ENCODE measurements at regions of chr2 and their contacts with region 1.

Region 1: DNA sequence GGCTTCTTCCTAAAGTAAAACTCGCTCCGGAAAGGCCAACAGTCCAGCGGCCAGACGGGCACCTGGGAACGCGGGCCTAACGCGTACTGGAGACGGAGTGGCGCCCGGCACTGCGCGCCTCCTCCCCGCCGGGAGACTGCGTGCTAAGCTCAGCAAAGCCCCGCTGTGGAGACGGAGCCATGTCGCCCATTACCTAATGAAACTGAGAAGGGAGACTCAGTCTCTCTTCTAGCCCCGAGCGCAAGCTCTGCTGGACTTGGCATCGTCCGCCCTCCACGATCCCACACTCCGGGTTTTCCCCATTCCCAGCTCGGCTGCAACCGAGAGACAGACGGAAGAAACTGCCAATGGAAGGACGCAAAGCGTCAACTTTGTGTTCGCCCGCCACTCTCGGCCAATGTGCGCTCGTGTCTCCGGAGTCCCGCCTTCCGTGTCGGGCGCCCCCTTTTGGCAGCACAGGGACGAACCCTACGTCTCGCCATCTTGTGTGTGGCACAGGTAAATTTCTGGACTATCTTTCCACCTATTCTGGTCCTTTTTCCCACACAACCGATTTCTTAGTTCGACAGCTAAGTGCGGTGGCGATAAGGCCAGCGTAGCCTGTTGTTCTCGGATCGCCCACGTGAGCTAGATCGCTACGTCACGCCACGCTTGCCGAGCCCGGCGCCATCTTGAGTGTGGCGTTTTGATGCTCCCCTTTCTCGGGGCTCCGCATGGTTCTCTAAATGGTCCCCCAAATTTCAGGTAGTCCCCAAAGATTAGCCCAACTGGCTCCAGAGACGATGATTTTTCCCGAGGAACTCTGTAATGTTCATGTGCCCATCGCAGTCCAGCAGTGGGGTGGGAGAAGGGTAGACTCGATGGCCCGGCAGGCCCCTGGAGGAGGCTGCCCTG is 1.3 kb upstream of the PTMA start:
- DNase-seq: peak; percentile 98
- ATAC-seq: peak; percentile 58
- H3K4me3 Mint-ChIP-seq: peak overlapping the region; percentile 88
- H3K27ac Mint-ChIP-seq: peak overlapping the region; percentile 100
- H3K4me1 Mint-ChIP-seq: peaks cover 19% of the 10 kb centered on the region
- H3K27me3 Mint-ChIP-seq: peaks cover 5% of the 10 kb centered on the region; the same call in 1 of the 2 replicates
- CTCF ChIP-seq: peak; percentile 73

Region 2: DNA sequence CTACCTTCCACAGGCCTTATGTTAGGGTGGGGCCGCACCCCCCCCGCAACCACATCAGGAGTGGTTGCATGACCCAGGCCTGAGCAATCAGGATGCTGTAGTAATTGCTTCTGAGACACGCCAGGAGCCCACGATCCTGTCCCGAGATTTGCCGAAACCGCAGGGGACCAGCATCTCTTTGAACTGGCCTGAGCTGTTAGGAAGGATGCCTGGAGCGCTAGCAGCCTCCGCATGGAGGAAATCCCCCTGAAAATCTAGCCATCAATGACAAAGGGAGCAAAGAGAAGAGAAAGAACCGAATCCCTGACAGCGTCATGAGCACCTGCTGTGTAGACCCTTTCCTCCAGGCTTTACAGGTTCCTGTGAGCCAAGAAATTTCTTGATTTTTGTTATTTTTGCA is 123.0 kb before region 1 on chr2:
- CTCF ChIA-PET with region 1: no interaction called
- POLR2A ChIA-PET with region 1: no interaction called
- DNase-seq: peak; percentile 44
- ATAC-seq: peak; percentile 82
- H3K4me3 Mint-ChIP-seq: no peak overlapping the region
- H3K27ac Mint-ChIP-seq: peak overlapping the region; percentile 34; the same call in 1 of the 2 replicates
- H3K4me1 Mint-ChIP-seq: peaks cover 19% of the 10 kb centered on the region
- H3K27me3 Mint-ChIP-seq: peaks cover 3% of the 10 kb centered on the region; the same call in 1 of the 2 replicates
- CTCF ChIP-seq: no peak

Region 3: GRCh38 chr2:231612179-231613053 is 94.6 kb before region 1 on chr2:
- CTCF ChIA-PET with region 1: interaction called, 21 read pairs
- POLR2A ChIA-PET with region 1: interaction called, 71 read pairs
- DNase-seq: peak; percentile 96
- ATAC-seq: peak; percentile 41
- H3K4me3 Mint-ChIP-seq: peak overlapping the region; percentile 77
- H3K27ac Mint-ChIP-seq: peak overlapping the region; percentile 100
- H3K4me1 Mint-ChIP-seq: peaks cover 58% of the 10 kb centered on the region
- H3K27me3 Mint-ChIP-seq: peaks cover 2% of the 10 kb centered on the region; the same call in 1 of the 2 replicates
- CTCF ChIP-seq: peak; percentile 99

Region 4: GRCh38 chr2:231662028-231662810 is 44.8 kb before region 1 on chr2:
- CTCF ChIA-PET with region 1: interaction called, 5 read pairs
- POLR2A ChIA-PET with region 1: interaction called, 17 read pairs
- DNase-seq: peak; percentile 98
- ATAC-seq: peak; percentile 67
- H3K4me3 Mint-ChIP-seq: peak overlapping the region; percentile 60
- H3K27ac Mint-ChIP-seq: peak overlapping the region; percentile 94
- H3K4me1 Mint-ChIP-seq: peaks cover 44% of the 10 kb centered on the region
- H3K27me3 Mint-ChIP-seq: peaks cover 20% of the 10 kb centered on the region
- CTCF ChIP-seq: no peak

Region 5: DNA sequence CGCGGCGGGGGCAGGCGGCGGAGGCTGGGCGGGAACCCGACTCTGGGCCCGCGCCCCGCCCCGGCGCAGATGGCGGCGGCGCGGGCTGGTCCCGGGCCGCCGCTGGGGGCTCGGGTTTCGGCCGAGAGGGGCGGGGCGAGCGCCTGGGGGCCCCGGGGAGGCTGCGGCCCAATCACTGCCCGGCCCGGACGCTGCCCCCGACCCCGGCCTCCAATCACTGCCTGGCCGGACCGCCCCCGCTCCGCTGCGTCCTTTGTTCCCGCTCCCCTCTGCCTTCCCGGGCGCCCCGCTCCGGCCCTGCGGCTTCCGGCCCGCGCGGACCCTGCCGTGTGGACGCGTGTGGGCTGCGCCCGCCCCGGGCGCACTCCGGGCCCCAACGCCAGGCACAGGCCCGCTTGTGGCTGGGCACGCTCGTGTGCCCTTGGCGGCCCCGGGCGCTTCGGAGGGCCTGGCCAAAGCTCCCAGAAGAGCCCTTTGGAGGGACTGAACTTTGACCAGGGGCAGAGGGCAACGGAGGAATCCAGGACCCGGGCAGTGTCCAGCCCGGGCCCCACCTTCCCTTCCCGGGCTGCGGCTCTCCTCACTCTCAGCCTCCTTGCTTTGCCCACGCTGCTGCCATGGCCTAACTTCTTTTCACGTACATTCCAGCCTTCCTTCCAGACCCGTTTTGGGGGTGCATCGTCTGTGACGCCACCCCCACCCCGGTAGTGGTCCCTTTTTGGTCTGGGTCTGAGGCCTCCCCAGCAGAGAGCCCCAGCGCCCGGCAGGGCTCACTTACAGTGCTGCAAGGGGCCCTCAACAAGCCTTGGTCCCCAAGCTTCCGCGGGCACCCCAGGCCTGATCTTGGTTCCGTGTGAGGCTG is 25.8 kb before region 1 on chr2:
- CTCF ChIA-PET with region 1: interaction called, 260 read pairs
- POLR2A ChIA-PET with region 1: interaction called, 72 read pairs
- DNase-seq: peak; percentile 94
- ATAC-seq: peak; percentile 75
- H3K4me3 Mint-ChIP-seq: peak overlapping the region; percentile 86
- H3K27ac Mint-ChIP-seq: peak overlapping the region; percentile 99
- H3K4me1 Mint-ChIP-seq: peaks cover 41% of the 10 kb centered on the region
- H3K27me3 Mint-ChIP-seq: no peaks in the 10 kb centered on the region
- CTCF ChIP-seq: no peak

Region 6: DNA sequence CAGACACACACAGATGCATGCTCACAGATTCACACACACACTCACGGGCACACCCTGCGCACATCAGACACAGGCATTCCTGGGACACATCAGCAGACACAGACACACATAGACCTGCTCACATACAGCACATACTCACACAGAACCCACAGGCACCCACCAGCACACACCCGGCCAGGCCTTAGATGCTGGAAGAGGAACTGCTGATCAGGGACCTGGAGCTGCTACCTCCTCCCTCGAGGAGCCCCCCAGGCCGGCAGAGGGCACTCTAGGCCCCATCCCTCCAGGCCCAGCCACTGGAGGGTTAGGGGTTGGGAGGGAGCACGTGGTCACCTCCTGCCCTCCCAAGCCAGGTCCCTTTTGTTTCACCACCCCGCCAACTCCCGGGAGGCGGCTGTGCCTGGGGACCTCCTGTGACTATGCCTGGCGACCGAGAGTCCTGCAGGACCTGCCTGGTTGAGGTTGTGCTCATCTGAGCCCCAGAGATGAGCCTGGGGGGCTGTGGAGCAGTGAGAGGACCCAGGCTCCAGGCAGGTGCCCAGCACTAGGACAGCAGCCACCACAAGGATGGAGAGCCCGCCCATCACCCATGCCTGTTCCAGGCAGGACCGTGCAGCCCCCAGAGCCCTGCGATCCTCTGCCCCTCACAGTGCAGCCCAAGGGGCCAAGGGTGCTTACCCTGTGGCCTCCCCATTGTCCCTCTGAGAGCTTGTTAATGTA is 19.7 kb before region 1 on chr2:
- CTCF ChIA-PET with region 1: interaction called, 125 read pairs
- POLR2A ChIA-PET with region 1: interaction called, 61 read pairs
- DNase-seq: peak; percentile 92
- ATAC-seq: peak; percentile 87
- H3K4me3 Mint-ChIP-seq: peak overlapping the region; percentile 64
- H3K27ac Mint-ChIP-seq: peak overlapping the region; percentile 61
- H3K4me1 Mint-ChIP-seq: peaks cover 49% of the 10 kb centered on the region
- H3K27me3 Mint-ChIP-seq: no peaks in the 10 kb centered on the region
- CTCF ChIP-seq: peak; percentile 33